ENCODE measurements at regions of chr12 and their contacts with region 1.

Region 1: GRCh38 chr12:47276621-47277309 is 197.0 kb upstream of the AMIGO2 start:
- DNase-seq: peak; percentile 69
- ATAC-seq: peak; percentile 77
- H3K4me3 Mint-ChIP-seq: peak overlapping the region; percentile 12
- H3K27ac Mint-ChIP-seq: peak overlapping the region; percentile 88
- H3K4me1 Mint-ChIP-seq: peaks cover 87% of the 10 kb centered on the region
- H3K27me3 Mint-ChIP-seq: no peaks in the 10 kb centered on the region

Region 2: GRCh38 chr12:47216150-47216677 is 60.6 kb before region 1 on chr12:
- CTCF ChIA-PET with region 1: interaction called, 5 read pairs
- POLR2A ChIA-PET with region 1: interaction called, 5 read pairs
- intact Hi-C with region 1: loop called (anchors 2 kb)
- DNase-seq: peak; percentile 81
- ATAC-seq: peak; percentile 43
- H3K4me3 Mint-ChIP-seq: peak overlapping the region; percentile 89
- H3K27ac Mint-ChIP-seq: peak overlapping the region; percentile 96
- H3K4me1 Mint-ChIP-seq: peaks cover 38% of the 10 kb centered on the region
- H3K27me3 Mint-ChIP-seq: no peaks in the 10 kb centered on the region

Region 3: DNA sequence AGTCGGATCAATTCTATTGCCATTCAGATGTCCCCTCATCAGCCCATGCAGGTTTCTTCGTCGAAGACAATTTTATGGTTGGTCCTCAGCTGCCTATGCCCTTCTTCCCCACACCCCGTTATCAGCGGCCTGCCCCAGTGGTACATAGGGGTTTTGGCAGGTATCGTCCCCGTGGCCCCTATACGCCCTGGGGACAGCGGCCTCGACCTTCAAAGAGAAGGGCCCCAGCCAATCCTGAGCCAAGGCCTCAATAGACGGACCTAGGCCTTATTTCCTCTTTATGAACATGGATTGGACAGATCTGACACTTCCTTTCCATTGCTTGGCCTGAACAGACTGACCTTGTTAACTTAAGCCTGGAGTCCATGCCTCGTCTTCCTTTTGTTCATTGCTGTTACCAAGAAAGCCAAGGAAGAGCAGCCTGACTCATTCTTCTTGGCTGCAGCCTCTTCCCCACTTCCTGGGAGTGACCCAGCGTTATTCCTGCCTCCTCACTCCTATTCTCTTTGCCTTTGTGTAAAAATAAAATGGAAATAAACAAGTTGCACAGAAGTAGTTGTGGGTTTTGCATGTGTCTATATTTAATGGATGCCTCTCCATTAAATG is 40.6 kb before region 1 on chr12:
- CTCF ChIA-PET with region 1: interaction called, 3 read pairs
- POLR2A ChIA-PET with region 1: no interaction called
- intact Hi-C with region 1: loop called in 1 of 2 experiments (anchors 5 kb)
- DNase-seq: no peak
- ATAC-seq: no peak
- H3K4me3 Mint-ChIP-seq: no peak overlapping the region
- H3K27ac Mint-ChIP-seq: peak overlapping the region; percentile 76
- H3K4me1 Mint-ChIP-seq: peaks cover 46% of the 10 kb centered on the region
- H3K27me3 Mint-ChIP-seq: no peaks in the 10 kb centered on the region

Region 4: DNA sequence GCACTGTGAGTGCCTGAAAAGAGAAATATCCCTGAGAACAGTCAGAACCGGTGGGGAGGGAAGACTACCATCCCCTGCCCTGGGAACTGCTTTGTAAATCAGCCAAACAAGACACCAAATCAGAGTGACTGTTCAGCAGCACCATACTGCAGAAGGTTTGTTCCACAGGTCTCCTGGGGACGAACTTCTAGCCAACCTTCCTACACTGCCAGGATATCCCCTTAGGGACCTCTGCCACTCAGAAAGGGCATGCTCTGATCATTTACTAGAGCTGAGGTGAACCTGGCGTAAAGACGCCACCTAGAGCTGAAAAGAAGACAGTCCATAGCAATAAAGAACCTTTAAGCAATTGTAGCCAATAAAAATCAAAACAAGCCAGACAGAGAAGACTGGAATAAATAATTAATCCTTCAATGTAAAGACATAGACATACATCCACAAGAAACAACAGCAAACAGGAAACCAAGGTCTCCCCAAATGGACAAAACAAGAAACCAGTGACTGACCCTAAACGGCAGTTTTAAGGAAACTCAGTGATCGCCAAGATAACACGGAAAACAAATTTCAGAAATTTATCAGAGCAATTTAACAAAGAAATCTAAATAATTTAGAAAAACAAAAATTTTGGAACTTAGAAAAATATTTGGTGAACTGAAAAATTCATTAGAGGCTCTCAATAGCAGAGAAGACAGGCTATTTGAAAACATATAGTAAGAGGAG is 31.1 kb after region 1 on chr12:
- CTCF ChIA-PET with region 1: interaction called, 4 read pairs
- POLR2A ChIA-PET with region 1: interaction called, 9 read pairs
- intact Hi-C with region 1: loop called (anchors 2 kb)
- DNase-seq: peak; percentile 73
- ATAC-seq: peak; percentile 84
- H3K4me3 Mint-ChIP-seq: peak overlapping the region; percentile 77
- H3K27ac Mint-ChIP-seq: peak overlapping the region; percentile 96
- H3K4me1 Mint-ChIP-seq: peaks cover 70% of the 10 kb centered on the region
- H3K27me3 Mint-ChIP-seq: no peaks in the 10 kb centered on the region

Region 5: DNA sequence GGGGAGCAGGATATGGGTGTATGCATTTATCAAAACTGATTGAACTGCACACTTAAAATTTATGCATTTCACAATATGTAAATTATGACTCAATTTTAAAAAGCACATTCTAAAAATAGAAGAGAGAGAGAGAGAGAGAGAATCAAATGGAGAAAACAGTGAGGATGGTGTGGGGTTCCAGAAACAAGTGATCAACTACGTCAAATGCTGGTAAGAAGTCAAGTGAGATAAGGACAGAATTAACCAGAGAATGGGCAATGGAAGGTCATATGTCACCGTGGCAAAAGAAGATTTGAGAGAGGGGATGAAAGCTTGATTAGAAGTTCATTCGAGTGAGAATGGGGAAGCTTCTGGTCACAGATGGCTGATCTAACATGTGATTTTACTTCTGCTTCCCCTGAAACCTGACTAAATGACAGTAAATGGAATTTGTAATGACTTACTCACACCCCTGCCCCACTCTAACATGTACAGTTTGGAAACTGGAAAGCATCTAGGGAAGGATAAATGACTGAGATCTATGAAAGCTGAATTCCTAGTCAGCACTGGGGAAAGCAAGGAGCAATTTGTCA is 79.5 kb after region 1 on chr12:
- CTCF ChIA-PET with region 1: no interaction called
- POLR2A ChIA-PET with region 1: interaction called, 3 read pairs
- intact Hi-C with region 1: loop called (anchors 2 to 5 kb)
- DNase-seq: peak; percentile 61
- ATAC-seq: peak; percentile 74
- H3K4me3 Mint-ChIP-seq: peak overlapping the region; percentile 58
- H3K27ac Mint-ChIP-seq: peak overlapping the region; percentile 100
- H3K4me1 Mint-ChIP-seq: peaks cover 86% of the 10 kb centered on the region
- H3K27me3 Mint-ChIP-seq: no peaks in the 10 kb centered on the region

Region 6: GRCh38 chr12:47556261-47557030 is 279.7 kb after region 1 on chr12:
- CTCF ChIA-PET with region 1: no interaction called
- POLR2A ChIA-PET with region 1: no interaction called
- intact Hi-C with region 1: no loop called
- DNase-seq: no peak
- ATAC-seq: no peak
- H3K4me3 Mint-ChIP-seq: no peak overlapping the region
- H3K27ac Mint-ChIP-seq: no peak overlapping the region
- H3K4me1 Mint-ChIP-seq: peaks cover 17% of the 10 kb centered on the region
- H3K27me3 Mint-ChIP-seq: no peaks in the 10 kb centered on the region

Region 7: GRCh38 chr12:47574252-47575021 is 297.7 kb after region 1 on chr12:
- CTCF ChIA-PET with region 1: no interaction called
- POLR2A ChIA-PET with region 1: no interaction called
- intact Hi-C with region 1: loop called in 1 of 2 experiments (anchors 2 kb)
- DNase-seq: no peak
- ATAC-seq: peak; percentile 96
- H3K4me3 Mint-ChIP-seq: no peak overlapping the region
- H3K27ac Mint-ChIP-seq: peak overlapping the region; percentile 94
- H3K4me1 Mint-ChIP-seq: peaks cover 28% of the 10 kb centered on the region
- H3K27me3 Mint-ChIP-seq: no peaks in the 10 kb centered on the region